OCI-LY7 (cell line): ENCODE measurements at regions of chr12 and their contacts with region 1.

Region 1: GRCh38 chr12:92145731-92146496 is at the start of gene BTG1:
- DNase-seq: peak; percentile 100
- H3K4me3 ChIP-seq: peak within 1 kb of the TSS; percentile 88
- H3K27ac ChIP-seq: peak within 1 kb of the TSS; percentile 73
- H3K4me1 ChIP-seq: peaks cover 16% of the 10 kb centered on the region
- CTCF ChIP-seq: no peak
- total RNA-seq, gene BTG1: 18.0 and 32.8 TPM in 2 replicates

Region 2: DNA sequence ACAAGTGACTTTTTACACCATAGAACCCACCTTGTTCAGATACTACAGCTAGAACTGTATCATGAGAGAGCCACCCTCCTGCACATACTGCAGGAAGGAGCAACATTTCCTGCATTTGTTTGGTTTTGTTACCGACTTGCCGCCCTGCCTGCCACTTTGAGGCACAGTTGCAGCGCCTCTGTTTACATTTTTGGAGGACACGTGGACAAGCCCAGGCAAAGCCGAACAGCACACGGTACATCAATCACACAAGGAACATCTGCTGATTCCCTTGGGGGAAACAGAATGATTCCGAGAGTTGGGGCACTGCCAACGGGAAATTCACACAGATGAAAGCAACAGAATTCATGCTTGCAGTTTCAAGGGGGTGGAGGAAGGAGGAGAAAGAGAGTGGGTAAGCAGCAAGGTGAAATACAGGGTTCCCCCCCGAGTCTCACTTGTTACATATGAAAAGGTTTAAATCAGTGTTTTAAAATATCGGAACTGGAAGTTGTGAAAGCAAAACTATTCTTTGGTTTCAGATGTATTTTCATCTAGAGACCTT is 111.0 kb before region 1 on chr12:
- CTCF ChIA-PET with region 1: interaction called, 3 read pairs
- POLR2A ChIA-PET with region 1: interaction called, 12 read pairs
- intact Hi-C with region 1: loop called (anchors 2 kb)
- DNase-seq: peak; percentile 88
- H3K4me3 ChIP-seq: peak overlapping the region; percentile 64
- H3K27ac ChIP-seq: peak overlapping the region; percentile 64
- H3K4me1 ChIP-seq: peaks cover 70% of the 10 kb centered on the region
- CTCF ChIP-seq: no peak

Region 3: GRCh38 chr12:92363295-92364146 is 217.6 kb after region 1 on chr12:
- CTCF ChIA-PET with region 1: interaction called, 14 read pairs
- POLR2A ChIA-PET with region 1: interaction called, 86 read pairs
- intact Hi-C with region 1: loop called (anchors 1 kb)
- DNase-seq: peak; percentile 96
- H3K4me3 ChIP-seq: peak overlapping the region; percentile 70
- H3K27ac ChIP-seq: peak overlapping the region; percentile 99
- H3K4me1 ChIP-seq: peaks cover 69% of the 10 kb centered on the region
- CTCF ChIP-seq: no peak; the same call in 1 of the 2 replicates

Region 4: DNA sequence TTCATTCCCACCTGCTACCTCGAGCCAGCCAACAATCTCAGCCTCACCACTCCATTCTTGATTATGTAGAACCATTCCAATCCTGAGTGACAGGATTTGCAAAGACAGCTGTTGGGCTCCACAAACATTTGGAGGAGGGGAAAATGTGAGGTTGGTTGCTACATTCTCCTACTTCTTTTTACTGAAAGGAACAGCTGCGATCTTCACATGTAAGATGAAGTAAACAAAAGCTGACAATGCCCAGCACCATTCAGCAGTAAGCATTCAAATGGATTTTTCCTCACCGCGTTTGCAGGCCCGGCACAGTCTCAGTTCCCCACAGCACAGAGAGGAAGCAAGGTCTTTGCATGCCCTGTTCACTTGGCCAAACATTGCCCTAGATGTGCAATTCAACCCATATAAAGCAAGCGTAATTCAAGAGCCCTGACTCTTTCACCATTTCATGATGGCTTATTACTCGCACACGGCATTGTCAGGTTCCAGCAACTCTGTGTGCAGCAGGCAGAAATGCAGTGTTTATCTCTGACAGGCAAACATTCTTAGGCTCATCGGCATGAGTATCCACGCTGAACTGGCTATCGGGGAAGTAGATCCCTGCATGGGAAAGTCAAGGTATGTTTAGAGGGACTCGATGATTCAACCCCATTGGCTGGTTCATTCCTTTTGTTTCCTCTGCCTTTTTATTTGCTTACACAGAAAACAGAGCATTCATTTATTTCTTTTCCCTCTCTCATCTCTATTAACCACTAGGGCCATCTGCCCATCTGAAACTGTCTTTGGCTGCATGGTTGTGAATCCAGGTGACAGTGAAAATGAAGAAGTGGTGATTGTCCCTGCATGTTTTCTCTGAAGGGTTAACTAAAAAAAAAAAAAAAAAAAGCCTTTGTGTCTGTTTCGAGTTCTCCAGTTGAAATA is 320.7 kb after region 1 on chr12:
- CTCF ChIA-PET with region 1: no interaction called
- POLR2A ChIA-PET with region 1: interaction called, 46 read pairs
- intact Hi-C with region 1: loop called (anchors 1 kb)
- DNase-seq: peak; percentile 92
- H3K4me3 ChIP-seq: peak overlapping the region; percentile 70
- H3K27ac ChIP-seq: peak overlapping the region; percentile 98
- H3K4me1 ChIP-seq: peaks cover 83% of the 10 kb centered on the region
- CTCF ChIP-seq: no peak; the same call in 1 of the 2 replicates

Region 5: DNA sequence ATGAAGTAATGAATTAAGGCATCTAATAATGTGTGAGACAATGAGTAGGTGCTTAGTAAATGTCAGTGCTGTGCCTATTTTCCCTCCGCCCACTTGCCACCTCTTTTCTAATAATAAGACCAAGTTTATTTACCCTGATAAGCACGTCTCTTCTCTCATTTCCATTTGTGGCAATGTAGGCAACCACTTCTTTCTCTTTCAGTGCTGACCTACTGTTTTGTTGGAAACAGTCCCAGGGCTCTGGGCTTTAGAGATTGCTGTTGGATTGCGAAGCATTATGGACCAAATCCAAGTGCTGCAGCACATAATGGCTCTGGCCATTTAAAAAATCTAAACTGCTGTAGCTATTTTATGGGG is 415.6 kb after region 1 on chr12:
- CTCF ChIA-PET with region 1: no interaction called
- POLR2A ChIA-PET with region 1: interaction called, 12 read pairs
- intact Hi-C with region 1: no loop called
- DNase-seq: no peak
- H3K4me3 ChIP-seq: no peak overlapping the region
- H3K27ac ChIP-seq: no peak overlapping the region
- H3K4me1 ChIP-seq: peaks cover 10% of the 10 kb centered on the region
- CTCF ChIP-seq: no peak